Uterus (tissue), 4 donors: ENCODE measurements at regions of chr4 and their contacts with region 1.

Region 1: DNA sequence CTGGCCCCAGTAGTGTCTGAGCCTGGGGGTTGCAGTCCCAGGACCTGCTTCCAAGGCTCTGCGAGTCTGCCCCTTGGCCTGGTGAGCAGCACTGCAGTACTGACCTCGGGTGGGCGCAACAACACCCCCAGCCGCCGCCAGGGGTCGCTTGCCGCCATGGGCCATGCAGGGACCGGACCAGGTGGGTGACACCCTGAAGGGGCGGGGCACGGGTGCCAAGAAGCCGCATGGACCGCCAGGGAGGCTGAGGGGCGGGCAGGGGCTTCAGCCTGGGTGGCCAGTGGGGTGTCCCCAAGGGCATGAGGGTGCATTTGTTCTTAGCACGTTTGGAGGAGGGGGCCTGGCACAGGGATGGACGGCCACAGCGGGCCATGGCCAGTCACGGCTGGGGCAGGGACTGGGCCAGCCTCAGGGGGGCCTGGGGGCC is 25.0 kb downstream of the TACC3 start:
- DNase-seq: peak; percentile 46 to 60
- H3K4me3 ChIP-seq: no peak overlapping the region
- H3K27ac ChIP-seq: no peak overlapping the region
- H3K4me1 ChIP-seq: no peaks in the 10 kb centered on the region
- H3K27me3 ChIP-seq: no peaks in the 10 kb centered on the region
- CTCF ChIP-seq: peak; percentile 54 to 78 (median 64)
- POLR2A ChIP-seq: no peak

Region 2: DNA sequence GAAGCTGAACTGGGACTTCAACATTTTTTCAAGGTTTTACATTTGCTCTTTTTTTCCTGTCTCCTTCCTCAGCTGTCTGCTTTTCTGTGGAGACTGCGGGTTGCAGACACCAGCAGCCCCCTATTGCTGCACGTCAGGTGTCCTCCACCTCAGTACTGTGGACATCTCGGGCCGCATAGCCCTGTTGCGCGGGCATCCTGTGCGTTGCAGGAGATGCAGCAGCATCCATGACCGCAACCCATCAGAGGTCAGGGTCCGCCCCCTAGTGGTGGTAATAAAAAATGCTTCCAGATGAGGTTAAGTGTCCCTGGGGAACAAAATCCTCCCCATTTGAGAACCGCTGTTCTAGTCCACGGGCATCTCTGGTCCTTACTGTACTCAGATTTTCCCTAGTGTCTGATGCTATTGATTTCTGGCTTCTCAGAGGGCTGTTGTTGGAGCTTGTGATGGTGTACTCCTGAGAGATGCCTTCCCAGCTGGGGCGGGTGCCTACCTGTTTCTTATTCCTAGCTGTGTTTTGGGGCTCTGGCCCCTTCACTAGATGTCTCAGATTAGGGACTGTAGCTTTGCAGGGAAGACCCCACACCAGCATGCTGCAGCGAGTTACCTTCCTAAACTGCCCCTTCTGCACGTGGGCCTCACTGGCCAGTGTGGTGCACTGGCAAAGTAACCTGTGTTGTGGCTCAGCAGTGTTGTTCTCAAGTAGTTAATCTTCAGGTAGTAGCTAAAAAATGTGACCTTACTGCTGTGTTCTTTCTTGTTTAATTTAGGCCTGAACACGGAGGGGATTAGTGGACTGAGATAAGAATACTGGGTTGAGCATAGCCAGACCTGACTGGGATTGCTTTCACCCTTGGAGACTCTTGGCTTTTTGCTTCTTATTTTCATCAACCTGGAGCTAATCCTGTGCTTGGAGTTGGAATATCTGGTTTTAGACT is 153.1 kb after region 1 on chr4:
- intact Hi-C with region 1: loop called (anchors 5 kb)
- DNase-seq: peak; percentile 58 to 64
- H3K4me3 ChIP-seq: no peak overlapping the region
- H3K27ac ChIP-seq: no peak overlapping the region
- H3K4me1 ChIP-seq: no peaks in the 10 kb centered on the region
- H3K27me3 ChIP-seq: no peaks in the 10 kb centered on the region
- CTCF ChIP-seq: peak; percentile 83 to 89 (median 87)
- POLR2A ChIP-seq: no peak